Common myeloid progenitor, CD34-positive (primary cell): ENCODE measurements at regions of chr19 and their contacts with region 1.

Region 1: DNA sequence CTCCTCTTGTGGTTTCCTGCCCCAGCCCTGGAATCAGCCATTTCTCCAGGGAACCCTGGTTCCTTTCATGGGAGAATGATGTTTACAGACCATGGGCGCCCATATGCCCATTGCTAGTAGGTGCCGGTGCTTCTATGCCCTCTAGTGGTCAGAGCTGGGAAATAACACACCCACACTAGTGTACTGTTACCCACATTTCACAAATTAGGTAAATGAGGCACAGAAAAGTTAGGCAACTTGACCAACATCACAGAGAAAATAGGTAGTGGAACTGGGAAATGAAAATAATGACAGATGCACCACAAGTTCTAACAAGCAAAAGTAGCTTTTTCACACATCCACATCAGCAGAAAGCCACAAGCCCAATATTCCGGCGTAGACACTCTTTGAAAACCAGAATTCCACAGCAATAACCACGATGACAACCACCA is 1.3 kb upstream of the CEACAM3 start:
- DNase-seq: peak; percentile 45 to 71 (median 62)
- H3K4me3 ChIP-seq: no peak overlapping the region
- H3K27ac ChIP-seq: no peak overlapping the region
- H3K4me1 ChIP-seq: peaks cover 0 to 8% (median under 1%) of the 10 kb centered on the region in 4 experiments
- H3K27me3 ChIP-seq: no peaks in the 10 kb centered on the region

Region 2: GRCh38 chr19:41811036-41811435 is 16.0 kb after region 1 on chr19:
- CTCF ChIA-PET with region 1: interaction called, 250 read pairs
- POLR2A ChIA-PET with region 1: interaction called, 3 read pairs
- DNase-seq: peak; percentile 65 to 94 (median 92)
- H3K4me3 ChIP-seq: peak overlapping the region in 3 of 7 experiments; percentile 33 to 42 (median 41)
- H3K27ac ChIP-seq: peak overlapping the region in 1 of 2 experiments; percentile 6
- H3K4me1 ChIP-seq: peaks cover 14 to 55% (median 46%) of the 10 kb centered on the region in 4 experiments
- H3K27me3 ChIP-seq: no peaks in the 10 kb centered on the region

Region 3: DNA sequence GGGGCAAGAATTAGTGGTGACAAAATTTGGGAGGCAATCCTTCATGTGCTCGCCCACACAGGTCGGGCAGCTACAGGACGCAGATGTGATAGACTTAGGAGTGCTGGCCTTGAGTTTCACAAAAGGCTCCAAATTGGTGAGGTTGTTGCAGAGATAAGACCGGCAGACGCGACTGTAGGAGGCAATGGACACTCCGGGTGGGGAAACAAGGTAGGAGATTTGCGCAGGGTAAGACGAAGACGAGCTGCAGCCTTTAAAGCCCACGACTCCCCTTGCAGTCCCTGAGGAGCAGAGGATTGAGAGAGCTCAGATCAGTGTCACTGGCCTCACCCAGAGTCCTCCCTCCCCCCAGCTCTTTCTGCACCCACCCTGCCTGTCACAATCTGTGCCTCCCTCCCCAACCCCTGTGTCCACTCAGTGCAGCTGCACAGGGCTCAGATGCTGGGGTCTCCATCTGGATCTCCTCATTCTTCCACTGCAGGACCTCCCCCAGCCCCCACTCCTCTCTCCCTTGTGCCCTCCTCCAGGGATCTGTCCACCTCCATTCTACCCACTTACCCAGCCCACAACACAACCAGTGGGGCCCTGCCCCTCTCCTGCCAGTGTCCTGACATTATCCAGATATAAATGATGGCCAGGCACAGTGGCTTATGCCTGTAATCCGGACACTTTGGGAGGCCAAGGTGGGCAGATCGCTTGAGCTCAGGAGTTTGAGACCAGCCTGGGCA is 43.1 kb after region 1 on chr19:
- CTCF ChIA-PET with region 1: interaction called, 22 read pairs
- POLR2A ChIA-PET with region 1: no interaction called
- DNase-seq: no peak
- H3K4me3 ChIP-seq: no peak overlapping the region
- H3K27ac ChIP-seq: no peak overlapping the region
- H3K4me1 ChIP-seq: no peaks in the 10 kb centered on the region
- H3K27me3 ChIP-seq: peaks cover 0 to 11% (median 0%) of the 10 kb centered on the region in 5 experiments